B cell (primary cell): ENCODE measurements at regions of chr11 and their contacts with region 1.

Region 1: DNA sequence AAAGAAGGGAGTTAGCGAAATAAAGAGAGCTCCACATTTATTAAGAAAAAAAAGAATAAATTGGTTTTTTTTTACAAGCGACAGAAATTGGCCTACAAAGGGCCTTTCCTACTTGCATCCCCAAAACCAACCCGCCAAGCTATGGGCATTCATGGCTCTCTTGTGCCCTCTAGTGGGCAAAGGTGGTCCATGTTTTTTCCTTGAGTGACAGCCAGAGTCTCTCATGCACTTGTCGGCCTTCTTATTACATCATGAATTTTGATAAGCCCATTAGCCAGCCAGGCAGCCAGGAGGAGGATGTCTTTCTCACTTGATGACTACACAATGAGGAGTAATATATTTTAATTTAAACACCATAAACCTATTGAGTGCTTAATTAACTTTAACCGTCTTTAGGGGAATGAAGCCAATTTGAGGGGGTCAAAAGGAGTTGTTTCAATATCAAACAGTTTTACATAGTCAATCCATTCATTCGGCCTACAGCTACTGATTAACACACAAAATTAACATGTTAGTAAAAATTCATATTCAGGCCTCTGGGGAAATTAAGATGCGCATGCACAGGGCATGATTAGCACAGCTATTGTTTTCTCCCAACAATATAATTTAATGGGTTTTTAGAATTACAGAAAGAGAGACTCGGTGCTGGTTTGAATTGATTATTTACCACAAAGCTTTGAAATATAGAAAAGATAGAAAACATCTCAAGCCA is 85.5 kb downstream of the RCN1 start:
- DNase-seq: peak; percentile 78
- ATAC-seq: peak; percentile 54
- H3K4me3 ChIP-seq: no peak overlapping the region
- H3K4me3 Mint-ChIP-seq: no peak overlapping the region
- H3K27ac ChIP-seq: no peak overlapping the region
- H3K27ac Mint-ChIP-seq: no peak overlapping the region
- H3K4me1 ChIP-seq: no peaks in the 10 kb centered on the region
- H3K4me1 Mint-ChIP-seq: no peaks in the 10 kb centered on the region
- H3K27me3 ChIP-seq: no peaks in the 10 kb centered on the region
- H3K27me3 Mint-ChIP-seq: peaks cover 12% of the 10 kb centered on the region
- CTCF ChIP-seq: peak; percentile 97

Region 2: DNA sequence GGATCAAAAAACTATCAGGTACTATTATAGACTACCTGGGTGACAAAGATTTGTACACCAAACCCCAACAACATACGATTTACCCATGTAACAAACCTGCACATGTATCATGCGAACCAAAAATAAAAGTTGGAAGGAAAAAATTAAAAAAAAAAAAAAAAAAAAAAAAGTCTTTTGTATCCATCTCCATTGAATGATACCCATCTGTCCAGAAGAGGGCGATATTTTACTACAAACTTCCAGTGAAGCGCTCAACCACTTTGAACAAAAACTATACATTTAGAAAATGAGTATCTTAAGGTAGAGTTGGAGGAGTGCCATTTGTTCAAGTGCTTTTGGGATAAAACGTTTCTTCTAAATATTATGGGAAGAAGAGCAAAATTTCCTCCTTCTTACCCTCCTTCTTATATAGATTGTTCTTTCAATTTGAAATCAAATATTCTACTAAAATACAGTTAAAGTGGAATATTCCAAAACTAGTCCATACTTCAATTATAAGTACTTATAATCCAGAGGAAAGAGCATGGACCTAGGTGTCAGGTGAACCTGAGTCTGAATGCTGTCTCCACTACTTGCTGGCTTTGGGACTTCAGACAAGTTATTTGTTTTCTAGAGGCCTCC is 1830.2 kb before region 1 on chr11:
- CTCF ChIA-PET with region 1: interaction called, 3 read pairs
- POLR2A ChIA-PET with region 1: no interaction called
- intact Hi-C with region 1: loop called (anchors 10 kb)
- DNase-seq: peak; percentile 68
- ATAC-seq: no peak
- H3K4me3 ChIP-seq: no peak overlapping the region
- H3K4me3 Mint-ChIP-seq: no peak overlapping the region
- H3K27ac ChIP-seq: no peak overlapping the region
- H3K27ac Mint-ChIP-seq: no peak overlapping the region
- H3K4me1 ChIP-seq: peaks cover 25 to 34% of the 10 kb centered on the region in 2 donors
- H3K4me1 Mint-ChIP-seq: peaks cover 40% of the 10 kb centered on the region
- H3K27me3 ChIP-seq: no peaks in the 10 kb centered on the region
- H3K27me3 Mint-ChIP-seq: no peaks in the 10 kb centered on the region
- CTCF ChIP-seq: peak; percentile 80

Region 3: DNA sequence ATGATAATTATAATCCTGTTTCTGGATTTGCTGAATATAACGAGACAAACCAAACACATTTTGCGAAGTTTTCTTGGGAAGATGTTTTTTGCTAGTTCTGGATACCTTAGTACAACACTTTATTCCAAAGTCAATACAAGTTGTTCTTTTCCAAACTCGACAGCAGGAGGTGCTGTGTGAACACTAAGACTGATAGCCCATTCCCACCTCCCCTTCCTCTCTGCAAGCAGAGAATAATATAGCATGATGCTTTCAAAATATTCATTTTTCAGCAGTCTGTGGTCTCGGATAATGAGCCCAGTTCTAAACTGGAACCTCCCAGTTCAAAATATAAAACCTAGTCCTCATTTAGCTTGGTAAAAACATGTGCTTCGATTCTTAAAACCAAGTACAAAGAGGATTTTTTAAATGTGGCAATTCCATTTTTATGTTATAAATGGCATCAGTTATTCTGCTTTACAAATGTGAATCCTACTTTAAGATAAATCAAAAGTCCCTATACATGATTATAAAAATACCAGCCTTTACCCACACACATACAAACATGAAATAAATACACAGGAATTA is 936.0 kb before region 1 on chr11:
- CTCF ChIA-PET with region 1: interaction called, 17 read pairs
- POLR2A ChIA-PET with region 1: no interaction called
- intact Hi-C with region 1: no loop called
- DNase-seq: peak; percentile 22
- ATAC-seq: no peak
- H3K4me3 ChIP-seq: no peak overlapping the region
- H3K4me3 Mint-ChIP-seq: no peak overlapping the region
- H3K27ac ChIP-seq: no peak overlapping the region
- H3K27ac Mint-ChIP-seq: no peak overlapping the region
- H3K4me1 ChIP-seq: no peaks in the 10 kb centered on the region
- H3K4me1 Mint-ChIP-seq: no peaks in the 10 kb centered on the region
- H3K27me3 ChIP-seq: no peaks in the 10 kb centered on the region
- H3K27me3 Mint-ChIP-seq: no peaks in the 10 kb centered on the region
- CTCF ChIP-seq: peak; percentile 33

Region 4: DNA sequence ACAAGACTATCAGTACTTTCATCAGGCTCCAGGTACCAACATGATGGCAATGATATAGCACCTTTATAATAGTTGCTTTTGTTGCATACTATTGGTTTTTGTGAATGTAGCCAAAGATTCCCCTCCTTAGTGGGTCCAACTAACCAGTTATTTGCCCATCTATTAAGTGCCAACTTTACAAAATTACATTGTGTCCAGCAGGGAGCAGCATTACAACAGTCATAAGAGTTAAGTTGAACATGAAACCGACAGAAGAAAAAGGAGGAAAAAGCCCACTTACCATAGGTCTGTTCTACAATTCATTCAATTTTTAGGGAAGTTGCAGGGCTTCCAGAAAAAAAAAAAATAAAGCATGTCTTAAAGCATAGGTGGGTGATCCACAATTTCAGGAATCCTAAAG is 688.5 kb before region 1 on chr11:
- CTCF ChIA-PET with region 1: no interaction called
- POLR2A ChIA-PET with region 1: no interaction called
- intact Hi-C with region 1: loop called (anchors 2 kb)
- DNase-seq: peak; percentile 36
- ATAC-seq: no peak
- H3K4me3 ChIP-seq: no peak overlapping the region
- H3K4me3 Mint-ChIP-seq: no peak overlapping the region
- H3K27ac ChIP-seq: no peak overlapping the region
- H3K27ac Mint-ChIP-seq: no peak overlapping the region
- H3K4me1 ChIP-seq: no peaks in the 10 kb centered on the region
- H3K4me1 Mint-ChIP-seq: peaks cover 1% of the 10 kb centered on the region
- H3K27me3 ChIP-seq: no peaks in the 10 kb centered on the region
- H3K27me3 Mint-ChIP-seq: no peaks in the 10 kb centered on the region
- CTCF ChIP-seq: peak; percentile 30

Region 5: GRCh38 chr11:32154275-32154674 is 22.1 kb before region 1 on chr11:
- CTCF ChIA-PET with region 1: interaction called, 13 read pairs
- POLR2A ChIA-PET with region 1: no interaction called
- intact Hi-C with region 1: no loop called
- DNase-seq: no peak
- ATAC-seq: no peak
- H3K4me3 ChIP-seq: no peak overlapping the region
- H3K4me3 Mint-ChIP-seq: no peak overlapping the region
- H3K27ac ChIP-seq: no peak overlapping the region
- H3K27ac Mint-ChIP-seq: no peak overlapping the region
- H3K4me1 ChIP-seq: no peaks in the 10 kb centered on the region
- H3K4me1 Mint-ChIP-seq: no peaks in the 10 kb centered on the region
- H3K27me3 ChIP-seq: peaks cover 0 to 8% (median 2%) of the 10 kb centered on the region in 4 experiments
- H3K27me3 Mint-ChIP-seq: peaks cover 25% of the 10 kb centered on the region
- CTCF ChIP-seq: no peak

Region 6: GRCh38 chr11:32615422-32615821 is 439.0 kb after region 1 on chr11:
- CTCF ChIA-PET with region 1: no interaction called
- POLR2A ChIA-PET with region 1: no interaction called
- intact Hi-C with region 1: no loop called
- DNase-seq: no peak
- ATAC-seq: no peak
- H3K4me3 ChIP-seq: no peak overlapping the region
- H3K4me3 Mint-ChIP-seq: no peak overlapping the region
- H3K27ac ChIP-seq: no peak overlapping the region
- H3K27ac Mint-ChIP-seq: no peak overlapping the region
- H3K4me1 ChIP-seq: no peaks in the 10 kb centered on the region
- H3K4me1 Mint-ChIP-seq: no peaks in the 10 kb centered on the region
- H3K27me3 ChIP-seq: no peaks in the 10 kb centered on the region
- H3K27me3 Mint-ChIP-seq: no peaks in the 10 kb centered on the region
- CTCF ChIP-seq: no peak